Breast epithelium (tissue), 4 donors: ENCODE measurements at regions of chr3 and their contacts with region 1.

Region 1: DNA sequence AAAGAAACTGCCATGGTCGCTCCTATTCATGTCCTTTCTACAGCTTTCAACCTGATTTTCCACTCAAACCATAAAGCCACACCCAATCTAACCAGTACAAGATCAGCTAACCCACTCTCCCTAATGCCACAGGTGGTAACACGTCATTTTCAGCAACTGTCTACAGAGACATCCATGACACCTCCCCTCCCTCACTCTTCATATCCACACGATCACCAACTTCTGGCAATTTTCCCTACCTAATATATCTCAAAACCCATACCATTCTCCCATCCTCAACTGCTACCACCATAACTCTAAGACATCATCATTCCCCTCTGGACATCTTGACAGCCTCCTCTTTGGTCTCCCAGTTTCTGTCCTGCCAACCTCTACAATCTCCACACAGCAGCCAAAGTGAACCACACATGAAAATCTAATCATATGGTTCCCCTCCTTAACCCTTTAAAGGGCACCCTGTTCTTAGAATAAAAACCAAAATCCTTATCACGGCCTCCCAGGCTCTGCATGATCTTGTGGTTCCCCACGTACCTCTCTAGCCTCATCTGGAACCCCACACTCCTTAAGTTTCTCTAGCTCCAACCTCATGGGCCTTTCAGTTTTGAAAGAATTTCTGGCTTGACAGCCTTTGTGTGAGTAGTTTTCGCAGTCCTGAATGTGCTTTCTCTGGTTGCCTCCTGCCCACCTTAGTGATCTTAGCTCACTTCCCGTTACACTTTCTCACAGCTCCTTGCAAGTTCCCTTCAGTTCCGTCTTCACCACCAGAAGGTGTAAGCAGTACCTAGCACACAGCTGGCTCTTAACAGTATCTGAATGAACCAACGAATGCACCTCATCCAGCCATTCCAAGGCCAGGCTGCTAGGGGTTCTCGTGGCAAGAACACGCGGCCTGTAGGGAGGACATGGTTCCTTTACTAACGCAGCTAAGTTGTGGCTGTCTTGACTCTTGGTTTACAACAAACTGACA is 33.4 kb downstream of the SPINK8 start:
- DNase-seq: no peak
- H3K4me3 ChIP-seq: peak overlapping the region; percentile 72 to 90 (median 85)
- H3K27ac ChIP-seq: peak overlapping the region; percentile 98 to 99
- H3K4me1 ChIP-seq: no peaks in the 10 kb centered on the region
- H3K27me3 ChIP-seq: no peaks in the 10 kb centered on the region
- CTCF ChIP-seq: no peak
- POLR2A ChIP-seq: no peak

Region 2: GRCh38 chr3:48285132-48285531 is 14.9 kb before region 1 on chr3:
- intact Hi-C with region 1: loop called (anchors 1 kb)
- DNase-seq: no peak
- H3K4me3 ChIP-seq: no peak overlapping the region
- H3K27ac ChIP-seq: no peak overlapping the region
- H3K4me1 ChIP-seq: no peaks in the 10 kb centered on the region
- H3K27me3 ChIP-seq: no peaks in the 10 kb centered on the region
- CTCF ChIP-seq: no peak
- POLR2A ChIP-seq: no peak

Region 3: GRCh38 chr3:48364840-48365239 is 64.8 kb after region 1 on chr3:
- intact Hi-C with region 1: loop called (anchors 2 kb)
- DNase-seq: no peak
- H3K4me3 ChIP-seq: no peak overlapping the region
- H3K27ac ChIP-seq: no peak overlapping the region
- H3K4me1 ChIP-seq: no peaks in the 10 kb centered on the region
- H3K27me3 ChIP-seq: no peaks in the 10 kb centered on the region
- CTCF ChIP-seq: no peak
- POLR2A ChIP-seq: no peak